Naive thymus-derived CD4-positive, alpha-beta T cell (primary cell): ENCODE measurements at regions of chr19 and their contacts with region 1.

Region 1: DNA sequence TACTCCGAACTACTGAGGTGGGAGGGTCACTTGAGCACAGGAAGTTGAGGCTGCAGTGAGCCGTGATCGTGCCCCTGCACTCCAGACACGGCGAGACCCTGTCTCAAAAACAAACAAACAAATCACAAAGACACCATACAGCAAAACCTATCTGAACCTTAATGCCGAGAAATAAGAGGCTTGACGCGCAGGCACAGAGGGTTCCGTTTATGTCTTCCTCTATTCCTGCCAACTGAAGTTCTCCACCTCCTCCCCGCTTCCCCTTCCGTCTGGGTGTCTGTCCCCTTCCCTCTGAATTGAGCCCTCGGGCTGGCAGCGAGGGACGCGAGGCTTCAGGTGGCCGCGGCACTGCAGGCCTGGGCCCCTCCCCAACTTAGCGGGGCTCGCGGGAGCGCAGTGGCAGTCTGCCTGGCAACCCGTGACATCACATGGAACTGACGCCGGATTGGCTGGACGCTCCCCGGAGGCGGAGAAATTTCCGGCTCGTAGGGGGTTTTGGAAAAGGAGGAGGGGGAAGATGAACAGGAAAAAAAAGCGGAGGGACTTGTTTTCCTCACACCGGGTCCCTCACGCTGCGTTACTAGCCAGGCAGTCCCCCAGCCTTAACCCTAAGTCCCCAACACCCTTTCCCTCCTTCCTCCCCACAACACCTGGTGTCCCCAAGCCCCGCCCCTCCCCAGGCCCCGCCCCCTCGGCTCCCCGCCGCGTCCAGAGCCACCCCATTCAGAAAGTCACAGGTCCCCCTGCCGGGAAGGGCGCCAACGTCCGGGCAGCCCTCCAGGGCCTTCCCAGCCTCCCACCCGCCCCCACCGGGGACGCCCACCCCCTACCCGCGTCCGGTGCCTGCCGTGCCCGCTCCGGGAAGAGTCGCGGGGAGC is 1.1 kb upstream of the MYBPC2 start:
- DNase-seq: peak; percentile 80 to 95 (median 89)
- ATAC-seq: peak; percentile 93
- H3K4me3 ChIP-seq: peak overlapping the region; percentile 61
- H3K4me3 Mint-ChIP-seq: peak overlapping the region; percentile 87 to 100 (median 92)
- H3K27ac ChIP-seq: peak overlapping the region; percentile 73
- H3K27ac Mint-ChIP-seq: peak overlapping the region; percentile 61 to 94 (median 90)
- H3K4me1 ChIP-seq: peaks cover 0 to 12% of the 10 kb centered on the region in 2 donors
- H3K4me1 Mint-ChIP-seq: peaks cover 0 to 23% (median 16%) of the 10 kb centered on the region in 7 donors
- H3K27me3 ChIP-seq: no peaks in the 10 kb centered on the region
- H3K27me3 Mint-ChIP-seq: peaks cover 0 to 19% (median 12%) of the 10 kb centered on the region in 5 donors

Region 2: DNA sequence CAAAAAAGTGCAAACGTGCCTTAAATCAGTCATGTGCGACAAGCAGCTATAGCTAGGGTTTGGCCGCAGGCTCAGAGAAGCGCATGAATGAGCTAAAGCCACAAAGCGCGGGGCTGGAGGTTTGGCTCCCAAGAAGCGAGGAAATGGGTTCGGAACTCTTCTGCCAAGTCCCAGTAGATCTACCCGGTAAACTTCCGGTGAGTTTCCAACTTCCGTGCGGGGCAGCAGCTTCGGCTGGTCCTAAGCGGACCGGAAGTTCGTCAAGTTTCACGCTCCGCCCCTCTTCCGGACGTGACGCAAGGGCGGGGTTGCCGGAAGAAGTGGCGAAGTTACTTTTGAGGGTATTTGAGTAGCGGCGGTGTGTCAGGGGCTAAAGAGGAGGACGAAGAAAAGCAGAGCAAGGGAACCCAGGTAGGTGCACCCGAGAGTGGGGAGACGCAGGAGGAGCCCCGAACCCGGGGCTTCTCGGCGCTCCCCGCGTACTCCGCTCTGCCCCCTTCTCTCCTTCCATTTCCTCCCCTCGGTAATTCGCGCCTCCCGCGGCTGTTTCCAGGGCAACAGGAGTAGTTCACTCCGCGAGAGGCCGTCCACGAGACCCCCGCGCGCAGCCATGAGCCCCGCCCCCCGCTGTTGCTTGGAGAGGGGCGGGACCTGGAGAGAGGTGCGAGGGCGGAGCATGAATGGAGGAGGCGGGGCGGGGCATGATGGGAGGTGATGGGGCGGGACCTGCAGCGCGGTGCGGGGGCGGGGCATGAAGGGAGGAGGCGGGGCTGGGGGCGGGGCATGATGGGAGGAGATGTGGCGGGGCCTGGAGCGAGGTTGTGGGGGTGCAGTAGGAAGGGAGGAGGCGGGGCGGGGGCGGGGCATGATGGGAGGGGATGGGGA is 55.2 kb before region 1 on chr19 and contains the start of gene NR1H2:
- CTCF ChIA-PET with region 1: no interaction called
- POLR2A ChIA-PET with region 1: interaction called, 3 read pairs
- intact Hi-C with region 1: loop called (anchors 2 to 5 kb)
- DNase-seq: peak; percentile 89 to 97 (median 95)
- ATAC-seq: peak; percentile 94
- H3K4me3 ChIP-seq: peak within 1 kb of the TSS; percentile 99
- H3K4me3 Mint-ChIP-seq: peak within 1 kb of the TSS; percentile 92 to 100 (median 98)
- H3K27ac ChIP-seq: peak within 1 kb of the TSS; percentile 100
- H3K27ac Mint-ChIP-seq: peak within 1 kb of the TSS; percentile 99 to 100 (median 100)
- H3K4me1 ChIP-seq: peaks cover 4 to 10% of the 10 kb centered on the region in 2 donors
- H3K4me1 Mint-ChIP-seq: peaks cover 12 to 37% (median 24%) of the 10 kb centered on the region in 7 donors
- H3K27me3 ChIP-seq: no peaks in the 10 kb centered on the region
- H3K27me3 Mint-ChIP-seq: no peaks in the 10 kb centered on the region
- total RNA-seq, gene NR1H2: 66.6 to 284 (median 114) TPM

Region 3: DNA sequence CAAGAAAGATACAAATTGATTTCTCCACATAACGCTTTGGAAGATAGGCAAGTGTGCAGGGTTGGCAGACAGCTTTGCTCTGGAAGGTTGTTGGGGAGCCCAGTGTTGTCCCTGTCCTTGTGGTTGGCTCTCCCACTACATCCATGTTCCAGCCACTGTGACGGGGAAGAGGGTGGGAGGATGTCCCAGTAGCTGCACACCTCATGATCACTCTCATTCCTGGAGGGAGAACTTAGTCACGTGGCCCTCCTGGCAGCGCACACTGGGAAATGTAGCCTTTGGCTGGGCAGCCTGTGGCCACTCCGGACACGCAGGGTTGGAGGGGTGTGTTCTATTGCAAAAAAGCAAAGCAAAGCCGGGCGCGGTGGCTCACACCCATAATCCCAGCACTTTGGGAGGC is 37.6 kb before region 1 on chr19:
- CTCF ChIA-PET with region 1: no interaction called
- POLR2A ChIA-PET with region 1: no interaction called
- intact Hi-C with region 1: no loop called
- DNase-seq: no peak
- ATAC-seq: no peak
- H3K4me3 ChIP-seq: no peak overlapping the region
- H3K4me3 Mint-ChIP-seq: no peak overlapping the region
- H3K27ac ChIP-seq: no peak overlapping the region
- H3K27ac Mint-ChIP-seq: no peak overlapping the region
- H3K4me1 ChIP-seq: no peaks in the 10 kb centered on the region
- H3K4me1 Mint-ChIP-seq: peaks cover 0 to 7% (median 4%) of the 10 kb centered on the region in 7 donors
- H3K27me3 ChIP-seq: no peaks in the 10 kb centered on the region
- H3K27me3 Mint-ChIP-seq: no peaks in the 10 kb centered on the region

Region 4: DNA sequence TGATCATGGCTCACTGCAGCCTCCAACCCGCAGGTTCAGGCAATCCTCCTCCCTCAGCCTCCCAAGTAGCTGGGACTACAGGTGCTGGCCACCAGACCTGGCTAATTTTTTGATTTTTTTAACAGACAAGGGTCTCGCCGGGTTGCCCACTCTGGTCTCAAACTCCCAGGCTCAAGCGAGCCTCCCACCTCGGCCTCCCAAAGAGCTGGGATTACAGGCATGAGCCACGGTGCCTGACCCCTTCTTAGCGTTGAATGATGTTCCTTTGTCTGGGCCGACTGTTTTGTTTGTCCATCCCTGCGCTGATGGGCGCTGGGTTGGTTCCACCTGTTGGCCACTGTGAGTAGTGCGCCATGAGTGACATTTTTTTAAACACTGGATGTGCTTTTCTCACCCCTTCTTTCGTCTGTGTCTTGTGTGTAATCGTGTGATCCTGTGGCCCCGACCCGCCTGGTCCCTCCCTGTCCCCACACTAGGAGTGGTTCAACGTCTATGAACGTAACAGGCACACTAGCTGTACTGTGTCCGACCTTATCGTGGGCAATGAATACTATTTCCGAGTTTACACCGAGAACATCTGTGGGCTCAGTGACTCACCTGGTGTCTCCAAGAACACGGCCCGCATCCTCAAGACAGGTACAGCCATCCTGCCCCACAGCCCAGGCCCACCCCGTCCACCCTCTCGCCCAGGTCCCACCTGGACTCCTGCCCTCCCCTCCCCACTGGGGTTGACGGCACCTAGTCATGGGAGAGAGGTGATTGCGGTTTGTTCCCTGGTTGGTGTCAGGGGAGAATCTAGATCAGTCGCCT is 29.7 kb after region 1 on chr19:
- CTCF ChIA-PET with region 1: no interaction called
- POLR2A ChIA-PET with region 1: no interaction called
- intact Hi-C with region 1: loop called in 1 of 2 experiments (anchors 1 kb)
- DNase-seq: peak in 8 of 9 donors; percentile 23 to 68 (median 46)
- ATAC-seq: peak; percentile 87
- H3K4me3 ChIP-seq: no peak overlapping the region
- H3K4me3 Mint-ChIP-seq: no peak overlapping the region
- H3K27ac ChIP-seq: no peak overlapping the region
- H3K27ac Mint-ChIP-seq: peak overlapping the region in 1 of 9 donors; percentile 52
- H3K4me1 ChIP-seq: peaks cover 0 to 5% of the 10 kb centered on the region in 2 donors
- H3K4me1 Mint-ChIP-seq: peaks cover 0 to 14% (median 4%) of the 10 kb centered on the region in 7 donors
- H3K27me3 ChIP-seq: peaks cover 0 to 6% of the 10 kb centered on the region in 2 donors
- H3K27me3 Mint-ChIP-seq: peaks cover 10 to 44% (median 21%) of the 10 kb centered on the region in 5 donors

Region 5: GRCh38 chr19:50476224-50476942 is 44.8 kb after region 1 on chr19 and contains the starts of genes EMC10 and GARIN5A:
- CTCF ChIA-PET with region 1: no interaction called
- POLR2A ChIA-PET with region 1: no interaction called
- intact Hi-C with region 1: loop called (anchors 1 kb)
- DNase-seq: peak; percentile 92 to 96 (median 95)
- ATAC-seq: peak; percentile 97
- H3K4me3 ChIP-seq: peak within 1 kb of the TSS; percentile 96
- H3K4me3 Mint-ChIP-seq: peak within 1 kb of the TSS; percentile 94 to 99 (median 98)
- H3K27ac ChIP-seq: peak within 1 kb of the TSS; percentile 96
- H3K27ac Mint-ChIP-seq: peak within 1 kb of the TSS; percentile 88 to 98 (median 96)
- H3K4me1 ChIP-seq: peaks cover 14 to 19% of the 10 kb centered on the region in 2 donors
- H3K4me1 Mint-ChIP-seq: peaks cover 21 to 36% (median 27%) of the 10 kb centered on the region in 7 donors
- H3K27me3 ChIP-seq: no peaks in the 10 kb centered on the region
- H3K27me3 Mint-ChIP-seq: no peaks in the 10 kb centered on the region
- total RNA-seq, gene EMC10: 75.5 to 95.2 (median 88.1) TPM
- total RNA-seq, gene GARIN5A: 0.59 to 0.93 (median 0.68) TPM in 4 of 5 experiments, not detected in the other

Region 6: GRCh38 chr19:50511068-50511822 is 79.7 kb after region 1 on chr19 and contains the start of gene JOSD2:
- CTCF ChIA-PET with region 1: no interaction called
- POLR2A ChIA-PET with region 1: no interaction called
- intact Hi-C with region 1: loop called (anchors 1 kb)
- DNase-seq: peak; percentile 89 to 99 (median 96)
- ATAC-seq: peak; percentile 94
- H3K4me3 ChIP-seq: peak within 1 kb of the TSS; percentile 75
- H3K4me3 Mint-ChIP-seq: peak within 1 kb of the TSS; percentile 75 to 97 (median 88)
- H3K27ac ChIP-seq: peak within 1 kb of the TSS; percentile 86
- H3K27ac Mint-ChIP-seq: peak within 1 kb of the TSS; percentile 87 to 99 (median 97)
- H3K4me1 ChIP-seq: peaks cover 7 to 16% of the 10 kb centered on the region in 2 donors
- H3K4me1 Mint-ChIP-seq: peaks cover 0 to 27% (median 19%) of the 10 kb centered on the region in 7 donors
- H3K27me3 ChIP-seq: no peaks in the 10 kb centered on the region
- H3K27me3 Mint-ChIP-seq: peaks cover 0 to 16% (median 6%) of the 10 kb centered on the region in 5 donors
- total RNA-seq, gene JOSD2: 13.0 to 45.9 (median 22.7) TPM